PC-9 (cell line): ENCODE measurements at regions of chr19 and their contacts with region 1.

Region 1: DNA sequence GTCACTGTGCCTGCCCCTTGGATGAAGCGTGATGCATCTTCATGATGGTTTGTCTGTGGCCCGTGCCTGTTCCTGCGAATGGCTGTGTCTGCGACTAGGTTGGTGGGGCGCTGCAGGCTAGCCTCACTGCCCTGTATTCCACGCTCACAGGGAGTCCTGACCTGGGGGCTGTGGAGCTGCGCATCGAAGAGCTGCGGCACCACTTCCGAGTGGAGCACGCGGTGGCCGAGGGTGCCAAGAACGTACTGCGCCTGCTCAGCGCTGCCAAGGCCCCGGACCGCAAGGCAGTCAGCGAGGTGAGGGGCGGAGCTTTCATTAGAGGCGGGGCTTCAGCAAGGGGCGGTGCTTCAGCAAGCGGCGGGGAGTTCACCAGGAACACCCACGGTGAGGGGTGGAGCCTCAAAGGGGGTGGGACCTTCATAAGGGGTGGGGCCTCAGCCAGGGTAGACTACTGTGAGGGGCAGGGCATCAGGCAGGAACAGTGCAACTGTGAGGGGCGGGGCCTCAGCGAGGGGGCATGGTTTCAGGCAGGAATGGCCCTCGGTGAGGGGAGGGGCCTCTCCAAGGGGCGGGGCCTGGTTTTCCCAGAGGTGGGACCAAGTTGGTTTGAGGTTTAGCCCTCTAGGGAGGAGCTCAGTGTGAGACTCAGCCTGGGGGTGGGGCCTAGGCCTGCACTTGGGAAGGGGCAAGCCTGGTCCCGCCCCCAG is 17.2 kb downstream of the PKN1 start:
- DNase-seq: peak; percentile 54 to 70
- H3K4me3 ChIP-seq: no peak overlapping the region
- H3K27ac ChIP-seq: no peak overlapping the region
- H3K4me1 ChIP-seq: no peaks in the 10 kb centered on the region
- H3K27me3 ChIP-seq: no peaks in the 10 kb centered on the region
- CTCF ChIP-seq: no peak

Region 2: DNA sequence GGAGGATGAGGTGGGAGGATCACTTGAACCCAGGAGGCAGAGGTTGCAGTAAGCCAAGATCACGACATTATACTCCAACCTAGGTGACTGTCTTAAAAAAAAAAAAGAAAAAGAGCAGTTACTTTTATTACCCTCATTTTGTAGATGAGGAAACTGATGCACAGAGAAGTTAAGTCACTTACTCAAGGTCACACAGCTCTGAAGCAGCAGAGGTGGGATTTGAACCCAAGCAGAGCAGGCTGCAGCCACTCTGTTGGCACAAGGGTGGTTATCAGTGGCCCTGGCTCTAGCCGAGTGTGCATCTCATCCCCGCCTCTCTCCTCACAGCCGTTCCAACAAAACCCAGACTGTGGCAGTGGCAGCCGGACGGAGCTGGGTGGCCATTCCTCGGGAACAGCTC is 411.1 kb before region 1 on chr19:
- CTCF ChIA-PET with region 1: no interaction called
- POLR2A ChIA-PET with region 1: interaction called, 11 read pairs
- intact Hi-C with region 1: no loop called
- DNase-seq: no peak
- H3K4me3 ChIP-seq: no peak overlapping the region
- H3K27ac ChIP-seq: no peak overlapping the region
- H3K4me1 ChIP-seq: no peaks in the 10 kb centered on the region
- H3K27me3 ChIP-seq: no peaks in the 10 kb centered on the region
- CTCF ChIP-seq: no peak

Region 3: DNA sequence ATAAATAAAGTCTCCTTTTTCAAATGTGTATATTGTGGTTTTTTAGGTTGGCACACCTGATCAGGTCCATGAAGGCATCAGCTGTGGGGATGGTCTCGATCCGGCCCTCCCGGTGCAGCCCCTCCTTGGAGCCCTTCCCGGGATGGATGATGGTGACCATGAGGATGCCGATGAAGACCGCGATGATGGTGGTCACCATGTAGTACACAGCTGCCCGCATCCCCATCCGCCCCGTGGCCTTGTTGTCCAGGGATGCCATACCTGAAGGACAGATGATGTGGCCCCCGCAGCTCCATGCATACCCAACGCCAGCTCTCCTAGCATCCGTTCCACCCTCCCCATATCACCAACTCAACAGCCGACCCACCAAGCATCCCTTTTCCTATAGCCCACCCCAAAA is 517.9 kb after region 1 on chr19:
- CTCF ChIA-PET with region 1: interaction called, 15 read pairs
- POLR2A ChIA-PET with region 1: no interaction called
- intact Hi-C with region 1: no loop called
- DNase-seq: no peak
- H3K4me3 ChIP-seq: no peak overlapping the region
- H3K27ac ChIP-seq: no peak overlapping the region
- H3K4me1 ChIP-seq: no peaks in the 10 kb centered on the region
- H3K27me3 ChIP-seq: no peaks in the 10 kb centered on the region
- CTCF ChIP-seq: no peak